Mucosa of descending colon (tissue), 3 donors: ENCODE measurements at regions of chr11 and their contacts with region 1.

Region 1: GRCh38 chr11:15101072-15101709 is 13.5 kb upstream of the INSC start:
- DNase-seq: peak in 2 of 3 donors; percentile 73 to 74
- ATAC-seq: peak; percentile 90
- H3K4me3 ChIP-seq: no peak overlapping the region
- H3K4me1 ChIP-seq: no peaks in the 10 kb centered on the region
- CTCF ChIP-seq: peak; percentile 85

Region 2: DNA sequence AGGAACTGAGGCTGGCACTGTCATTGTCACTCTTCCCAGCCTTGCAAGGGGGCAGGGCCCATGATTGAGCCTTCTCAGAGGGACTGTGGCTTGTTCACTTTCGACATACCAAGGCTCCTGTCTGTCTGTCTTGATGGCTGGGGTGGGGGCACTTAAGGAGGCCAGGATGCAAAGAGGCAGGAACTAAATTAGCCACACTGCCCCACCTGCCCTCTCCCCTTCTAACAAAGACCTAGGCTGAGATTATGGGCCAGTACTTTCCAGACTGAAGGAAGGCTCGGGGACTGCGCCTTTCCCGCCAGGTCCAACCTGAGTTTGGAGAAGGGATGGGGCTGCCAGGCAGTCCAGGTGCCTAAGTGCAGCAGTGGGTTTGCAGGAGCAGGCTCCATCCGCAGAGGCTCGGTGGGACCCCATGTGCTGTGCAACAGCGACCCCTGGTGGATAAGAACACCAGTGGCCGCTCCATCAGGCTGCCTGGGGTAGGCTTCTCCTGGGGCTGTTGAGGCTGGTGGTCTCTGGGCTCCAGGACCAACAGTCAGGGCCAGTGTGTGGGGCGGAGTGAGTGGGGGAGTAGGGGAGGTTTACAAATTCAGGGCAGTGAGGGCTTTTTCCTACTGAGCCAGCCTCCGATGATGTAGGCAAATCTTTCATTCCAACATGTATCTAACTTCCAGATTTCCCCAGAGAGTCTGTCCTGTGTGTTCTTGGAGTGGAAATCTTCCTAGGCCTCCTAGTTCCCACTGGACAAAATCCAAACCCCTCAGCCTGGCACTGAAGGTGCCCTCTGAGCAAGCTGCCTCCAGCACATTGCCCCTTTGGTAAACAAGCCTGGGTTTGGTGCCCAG is 107.4 kb after region 1 on chr11:
- intact Hi-C with region 1: loop called (anchors 2 to 5 kb)
- DNase-seq: peak; percentile 72 to 86 (median 80)
- ATAC-seq: peak; percentile 93
- H3K4me3 ChIP-seq: no peak overlapping the region
- H3K4me1 ChIP-seq: peaks cover 7% of the 10 kb centered on the region
- CTCF ChIP-seq: peak; percentile 78